K562 (cell line): ENCODE measurements at regions of chr1 and their contacts with region 1.

Region 1: DNA sequence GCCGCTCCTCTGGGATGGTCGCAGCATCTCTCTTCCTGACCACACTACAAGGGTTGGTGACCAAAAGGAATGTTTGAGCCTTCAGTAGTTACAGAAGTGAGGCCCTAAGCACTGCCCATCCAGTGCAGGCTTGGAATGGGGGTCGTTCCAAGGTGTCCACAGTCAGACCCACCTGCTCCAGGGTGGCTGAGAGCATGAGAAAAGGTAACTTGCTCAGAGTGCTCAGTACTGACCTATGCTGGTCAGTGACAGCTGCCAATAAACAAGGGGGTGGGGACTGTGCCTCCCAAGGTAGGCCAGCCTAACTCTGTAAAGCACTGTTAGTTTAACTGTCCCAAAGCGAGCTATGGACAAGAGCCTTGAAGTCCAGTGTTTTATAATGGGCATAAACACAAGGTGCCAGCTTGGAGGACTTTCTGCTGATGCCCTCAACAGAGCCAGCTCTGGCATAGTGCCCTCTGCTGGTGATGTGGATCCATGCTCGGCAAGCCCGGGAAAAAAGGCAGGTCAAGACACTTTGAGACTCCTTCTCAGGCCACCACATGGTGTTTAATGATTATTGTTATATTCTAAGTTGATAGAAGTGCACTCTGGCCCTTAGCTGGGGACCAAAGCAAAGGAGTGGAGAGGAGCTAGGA is 78.1 kb upstream of the DNAH14 start:
- DNase-seq: peak; percentile 46 to 60 (median 54)
- ATAC-seq: peak; percentile 89
- H3K4me3 ChIP-seq: no peak overlapping the region
- H3K27ac ChIP-seq: no peak overlapping the region
- H3K4me1 ChIP-seq: no peaks in the 10 kb centered on the region
- H3K27me3 ChIP-seq: peaks cover 0 to 7% of the 10 kb centered on the region in 2 experiments; a peak in 1 of 5 replicates
- CTCF ChIP-seq: peak; percentile 73 to 90 (median 76)
- EP300 ChIP-seq: no peak
- POLR2A ChIP-seq: no peak
- RAD21 ChIP-seq: peak; percentile 60 to 67; a peak in 3 of 4 replicates

Region 2: GRCh38 chr1:224700915-224701531 is 150.3 kb before region 1 on chr1:
- CTCF ChIA-PET with region 1: no interaction called
- POLR2A ChIA-PET with region 1: no interaction called
- in situ Hi-C with region 1: no loop called
- intact Hi-C with region 1: loop called (anchors 2 kb)
- DNase-seq: peak; percentile 56 to 74 (median 70)
- ATAC-seq: peak; percentile 93
- H3K4me3 ChIP-seq: no peak overlapping the region
- H3K27ac ChIP-seq: no peak overlapping the region
- H3K4me1 ChIP-seq: no peaks in the 10 kb centered on the region
- H3K27me3 ChIP-seq: peaks cover 27 to 40% of the 10 kb centered on the region in 2 experiments
- CTCF ChIP-seq: peak; percentile 62 to 72 (median 70)
- EP300 ChIP-seq: no peak
- POLR2A ChIP-seq: no peak
- RAD21 ChIP-seq: peak in 1 of 2 experiments; percentile 53; a peak in 2 of 4 replicates

Region 3: GRCh38 chr1:224747578-224747977 is 103.8 kb before region 1 on chr1:
- CTCF ChIA-PET with region 1: no interaction called
- POLR2A ChIA-PET with region 1: no interaction called
- in situ Hi-C with region 1: no loop called
- intact Hi-C with region 1: no loop called
- DNase-seq: no peak
- ATAC-seq: no peak
- H3K4me3 ChIP-seq: no peak overlapping the region
- H3K27ac ChIP-seq: no peak overlapping the region
- H3K4me1 ChIP-seq: no peaks in the 10 kb centered on the region
- H3K27me3 ChIP-seq: peaks cover 2 to 25% of the 10 kb centered on the region in 2 experiments; a peak in 4 of 5 replicates
- CTCF ChIP-seq: no peak
- EP300 ChIP-seq: no peak
- POLR2A ChIP-seq: no peak
- RAD21 ChIP-seq: no peak

Region 4: DNA sequence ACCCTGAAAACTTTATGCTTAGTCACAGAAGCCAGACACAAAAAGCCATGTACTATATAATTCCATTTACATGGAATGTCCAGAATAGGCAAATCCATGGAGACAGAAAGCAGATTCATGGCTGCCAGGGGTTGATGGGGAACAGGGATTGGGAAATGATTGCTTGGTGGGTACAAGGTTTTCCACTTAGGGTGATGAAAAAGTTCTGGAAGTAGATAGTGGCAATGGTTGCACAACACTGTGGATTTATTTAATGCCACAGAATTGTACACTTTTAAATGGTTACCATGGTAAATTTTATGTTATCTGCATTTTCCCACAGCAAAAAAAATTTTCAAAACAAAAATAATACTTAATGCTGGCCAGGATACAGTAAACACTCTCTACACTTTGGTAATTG is 761.0 kb after region 1 on chr1:
- CTCF ChIA-PET with region 1: no interaction called
- POLR2A ChIA-PET with region 1: no interaction called
- in situ Hi-C with region 1: no loop called
- intact Hi-C with region 1: no loop called
- DNase-seq: no peak
- ATAC-seq: no peak
- H3K4me3 ChIP-seq: no peak overlapping the region
- H3K27ac ChIP-seq: no peak overlapping the region
- H3K4me1 ChIP-seq: no peaks in the 10 kb centered on the region
- H3K27me3 ChIP-seq: peaks cover 10 to 17% of the 10 kb centered on the region in 2 experiments
- CTCF ChIP-seq: no peak
- EP300 ChIP-seq: no peak
- POLR2A ChIP-seq: no peak
- RAD21 ChIP-seq: no peak